ENCODE measurements at regions of chr16 and their contacts with region 1.

Region 1: DNA sequence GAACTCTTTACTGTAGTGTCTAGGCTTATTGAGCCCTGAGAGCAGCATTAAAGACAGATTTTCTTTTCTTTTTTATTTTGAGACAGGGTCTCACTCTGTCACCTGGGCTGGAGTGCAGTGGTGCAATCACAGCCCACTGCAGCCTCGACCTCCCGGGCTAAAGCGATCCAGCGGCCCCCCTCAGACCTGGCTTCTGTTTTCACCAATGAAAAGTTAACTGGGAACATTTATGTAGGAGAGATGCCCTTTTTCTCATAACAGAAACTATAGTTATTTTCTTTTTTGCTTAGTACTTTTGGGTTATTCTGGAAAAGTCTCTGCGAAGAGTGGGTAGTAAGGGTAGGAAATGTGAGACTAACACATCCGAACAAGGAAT is 1.5 kb downstream of the MAP1LC3B start:
- DNase-seq: no peak
- ATAC-seq: no peak
- H3K4me3 Mint-ChIP-seq: peak overlapping the region; percentile 84
- H3K27ac Mint-ChIP-seq: peak overlapping the region; percentile 91
- H3K4me1 Mint-ChIP-seq: peaks cover 40% of the 10 kb centered on the region
- H3K27me3 Mint-ChIP-seq: no peaks in the 10 kb centered on the region

Region 2: DNA sequence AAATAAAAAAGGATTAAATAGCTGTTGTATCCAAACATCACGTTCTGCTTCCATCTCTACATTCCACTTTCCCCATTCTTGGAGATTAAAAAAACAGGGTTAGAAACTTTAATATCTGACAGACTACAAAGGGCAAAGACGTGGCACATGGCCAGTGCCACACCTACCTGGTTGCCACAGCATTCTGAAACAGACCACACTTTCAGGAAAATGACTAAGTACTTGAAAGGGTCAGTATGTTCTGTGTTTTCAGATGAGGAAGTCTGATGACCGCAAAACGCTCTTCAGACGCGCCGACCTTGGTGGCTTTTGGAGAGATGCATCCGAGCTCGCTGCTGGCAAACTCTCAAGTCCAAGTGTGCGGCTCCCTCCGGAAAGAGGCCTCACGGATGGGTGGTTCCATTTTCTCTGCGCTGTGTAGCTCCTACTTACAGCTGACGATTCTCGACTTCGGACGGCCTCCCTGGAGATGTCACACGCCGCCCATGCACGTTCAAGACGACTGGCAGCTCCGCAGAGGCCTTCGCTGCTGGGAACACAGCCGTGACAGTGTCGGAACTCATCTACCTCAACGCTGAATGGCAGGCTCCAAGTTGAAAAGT is 13.9 kb after region 1 on chr16:
- CTCF ChIA-PET with region 1: interaction called, 11 read pairs
- POLR2A ChIA-PET with region 1: interaction called, 3 read pairs
- DNase-seq: no peak
- ATAC-seq: no peak
- H3K4me3 Mint-ChIP-seq: no peak overlapping the region
- H3K27ac Mint-ChIP-seq: no peak overlapping the region
- H3K4me1 Mint-ChIP-seq: no peaks in the 10 kb centered on the region
- H3K27me3 Mint-ChIP-seq: no peaks in the 10 kb centered on the region

Measured in activated CD8-positive, alpha-beta T cell treated with anti-CD3 and anti-CD28 coated beads, Interleukin-2, amount 10 ng/mL, durations not matched to agents 7 days and 5 days (primary cell).